Esophagus muscularis mucosa (tissue), 4 donors: ENCODE measurements at regions of chr12 and their contacts with region 1.

Region 1: GRCh38 chr12:7219599-7220243 is 30.2 kb downstream of the PEX5 start:
- DNase-seq: peak; percentile 91
- H3K4me3 ChIP-seq: no peak overlapping the region
- H3K27ac ChIP-seq: no peak overlapping the region
- H3K4me1 ChIP-seq: no peaks in the 10 kb centered on the region
- H3K27me3 ChIP-seq: no peaks in the 10 kb centered on the region
- CTCF ChIP-seq: peak; percentile 82 to 85 (median 84)
- EP300 ChIP-seq: no peak
- POLR2A ChIP-seq: no peak

Region 2: GRCh38 chr12:7395950-7396349 is 176.2 kb after region 1 on chr12:
- intact Hi-C with region 1: no loop called
- DNase-seq: no peak
- H3K4me3 ChIP-seq: no peak overlapping the region
- H3K27ac ChIP-seq: no peak overlapping the region
- H3K4me1 ChIP-seq: no peaks in the 10 kb centered on the region
- H3K27me3 ChIP-seq: no peaks in the 10 kb centered on the region
- CTCF ChIP-seq: no peak
- EP300 ChIP-seq: no peak
- POLR2A ChIP-seq: no peak

Region 3: GRCh38 chr12:7459973-7460372 is 240.3 kb after region 1 on chr12:
- intact Hi-C with region 1: loop called (anchors 2 kb)
- DNase-seq: no peak
- H3K4me3 ChIP-seq: no peak overlapping the region
- H3K27ac ChIP-seq: no peak overlapping the region
- H3K4me1 ChIP-seq: no peaks in the 10 kb centered on the region
- H3K27me3 ChIP-seq: no peaks in the 10 kb centered on the region
- CTCF ChIP-seq: no peak
- EP300 ChIP-seq: no peak
- POLR2A ChIP-seq: no peak

Region 4: DNA sequence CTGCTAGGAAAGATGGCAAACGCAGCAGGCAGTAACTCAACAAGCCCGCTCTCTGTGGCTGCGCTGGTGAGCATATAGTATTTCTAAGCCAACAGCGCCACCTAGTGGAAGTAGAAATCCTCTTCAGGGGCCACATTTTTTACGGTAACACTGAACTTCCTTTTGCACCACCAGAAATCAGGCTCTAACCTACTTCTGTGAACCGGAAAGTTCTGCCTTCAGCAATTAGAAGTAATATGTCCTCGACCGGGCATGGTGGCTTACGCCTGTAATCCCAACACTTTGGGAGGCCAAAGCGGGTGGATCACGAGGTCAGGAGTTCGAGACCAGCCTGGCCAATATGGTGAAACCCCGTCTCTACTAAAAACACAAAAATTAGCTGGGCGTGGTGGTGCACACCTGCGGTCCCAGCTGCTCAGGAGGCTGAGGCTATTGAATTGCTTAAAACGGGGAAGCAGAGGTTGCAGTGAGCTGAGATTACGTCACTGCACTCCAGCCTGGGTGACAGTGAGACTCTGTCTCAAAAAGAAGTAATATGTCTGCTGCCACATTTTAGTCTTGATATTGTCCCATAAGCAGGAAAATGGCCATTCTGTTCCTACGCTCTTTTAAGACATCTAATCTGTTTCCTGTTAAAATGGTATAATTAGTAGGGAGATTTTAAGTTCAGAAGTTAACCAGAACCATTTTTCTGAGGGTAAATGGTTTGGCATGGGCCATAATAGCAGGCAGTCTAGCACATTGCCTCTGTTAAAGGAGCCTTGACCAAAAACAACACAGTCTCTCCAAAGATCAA is 419.2 kb after region 1 on chr12:
- intact Hi-C with region 1: loop called (anchors 2 kb)
- DNase-seq: peak; percentile 95
- H3K4me3 ChIP-seq: peak overlapping the region; percentile 42 to 57 (median 49)
- H3K27ac ChIP-seq: no peak overlapping the region
- H3K4me1 ChIP-seq: peaks cover 0 to 15% (median 8%) of the 10 kb centered on the region in 4 donors
- H3K27me3 ChIP-seq: peaks cover 0 to 10% (median 0%) of the 10 kb centered on the region in 4 donors
- CTCF ChIP-seq: peak; percentile 86 to 89 (median 87)
- EP300 ChIP-seq: no peak
- POLR2A ChIP-seq: no peak